Right ventricle myocardium superior (tissue), 1 donor: ENCODE measurements at regions of chr2 and their contacts with region 1.

Region 1: GRCh38 chr2:210663631-210664089 is 107.3 kb downstream of the CPS1 start:
- DNase-seq: no peak
- ATAC-seq: peak; percentile 52

Region 2: DNA sequence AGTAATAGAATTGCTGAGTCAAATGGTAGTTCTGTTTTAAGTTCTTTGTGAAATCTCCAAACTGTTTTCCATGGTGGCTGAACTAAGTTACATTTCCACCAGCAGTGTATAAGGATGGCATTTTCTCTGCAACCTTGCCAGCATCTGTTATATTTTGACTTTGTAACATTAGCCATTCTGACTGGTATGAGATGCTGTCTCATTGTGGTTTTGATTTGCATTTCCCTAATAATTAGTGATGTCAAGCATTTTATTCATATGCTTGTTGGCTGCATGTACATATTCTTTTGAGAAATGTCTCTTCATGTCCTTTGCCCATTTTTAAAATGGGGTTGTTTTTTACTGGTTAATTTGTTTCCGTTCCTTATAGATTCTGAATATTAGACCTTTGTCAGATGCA is 251.0 kb before region 1 on chr2:
- intact Hi-C with region 1: no loop called
- DNase-seq: no peak
- ATAC-seq: no peak

Region 3: GRCh38 chr2:210782222-210782621 is 118.6 kb after region 1 on chr2:
- intact Hi-C with region 1: no loop called
- DNase-seq: no peak
- ATAC-seq: no peak

Region 4: DNA sequence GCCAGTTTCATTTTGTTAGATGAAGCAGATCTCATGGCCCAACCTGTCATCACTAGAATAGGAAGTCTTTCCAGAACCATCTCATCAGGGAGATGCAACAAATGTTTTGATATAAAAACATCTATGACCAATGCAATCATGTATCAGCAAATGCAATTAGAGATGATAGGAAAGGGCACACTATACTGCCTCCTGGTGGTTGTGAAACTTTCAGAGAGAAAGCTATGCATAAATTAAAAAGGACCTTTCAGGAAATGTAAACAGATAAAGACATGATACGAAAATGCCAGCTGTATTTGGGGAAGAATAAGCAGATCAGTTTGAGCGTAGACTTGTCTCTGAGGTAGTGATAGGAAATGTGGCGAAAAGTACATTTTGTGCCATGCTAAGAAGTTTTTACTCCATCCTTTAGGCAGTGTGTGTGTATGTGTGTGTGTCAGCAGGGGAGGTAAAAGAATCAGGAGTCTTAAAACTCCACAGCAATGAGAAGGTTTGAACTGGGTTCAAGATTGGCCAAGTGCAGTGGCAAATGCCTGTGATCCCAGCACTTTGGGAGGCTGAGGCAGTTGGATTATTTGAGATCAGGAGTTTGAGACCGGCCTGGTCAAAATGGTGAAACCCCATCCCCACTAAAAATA is 372.0 kb after region 1 on chr2:
- intact Hi-C with region 1: loop called (anchors 5 kb)
- DNase-seq: no peak
- ATAC-seq: no peak